Activated CD4-positive, alpha-beta memory T cell treated with anti-CD3 and anti-CD28 coated beads for 36 hours (primary cell): ENCODE measurements at regions of chr6 and their contacts with region 1.

Region 1: GRCh38 chr6:130282234-130282995 is 59.7 kb upstream of the SAMD3 start:
- DNase-seq: no peak
- H3K4me3 Mint-ChIP-seq: no peak overlapping the region
- H3K27ac Mint-ChIP-seq: no peak overlapping the region
- H3K4me1 Mint-ChIP-seq: peaks cover 4% of the 10 kb centered on the region
- H3K27me3 Mint-ChIP-seq: no peaks in the 10 kb centered on the region

Region 2: DNA sequence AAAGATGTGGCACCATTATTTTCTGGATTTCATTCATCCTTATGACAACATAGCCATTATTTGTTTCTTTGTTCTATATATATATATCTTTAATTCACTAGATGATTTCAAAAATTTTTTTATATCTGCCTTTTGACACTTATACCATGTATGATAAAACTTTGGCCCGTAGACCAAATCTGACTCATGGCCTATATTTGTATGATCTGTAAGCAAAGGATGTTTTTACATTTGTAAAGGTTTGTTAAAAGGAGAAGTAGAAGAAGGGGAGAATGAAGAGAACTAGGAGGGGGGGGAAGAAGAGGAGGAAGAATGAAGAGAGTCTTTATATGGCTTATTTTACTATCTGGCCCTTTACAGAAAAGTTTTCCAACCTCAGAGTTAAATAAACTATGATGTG is 1119.8 kb before region 1 on chr6:
- CTCF ChIA-PET with region 1: no interaction called
- POLR2A ChIA-PET with region 1: no interaction called
- intact Hi-C with region 1: no loop called
- DNase-seq: no peak
- H3K4me3 Mint-ChIP-seq: no peak overlapping the region
- H3K27ac Mint-ChIP-seq: no peak overlapping the region
- H3K4me1 Mint-ChIP-seq: no peaks in the 10 kb centered on the region
- H3K27me3 Mint-ChIP-seq: no peaks in the 10 kb centered on the region

Region 3: DNA sequence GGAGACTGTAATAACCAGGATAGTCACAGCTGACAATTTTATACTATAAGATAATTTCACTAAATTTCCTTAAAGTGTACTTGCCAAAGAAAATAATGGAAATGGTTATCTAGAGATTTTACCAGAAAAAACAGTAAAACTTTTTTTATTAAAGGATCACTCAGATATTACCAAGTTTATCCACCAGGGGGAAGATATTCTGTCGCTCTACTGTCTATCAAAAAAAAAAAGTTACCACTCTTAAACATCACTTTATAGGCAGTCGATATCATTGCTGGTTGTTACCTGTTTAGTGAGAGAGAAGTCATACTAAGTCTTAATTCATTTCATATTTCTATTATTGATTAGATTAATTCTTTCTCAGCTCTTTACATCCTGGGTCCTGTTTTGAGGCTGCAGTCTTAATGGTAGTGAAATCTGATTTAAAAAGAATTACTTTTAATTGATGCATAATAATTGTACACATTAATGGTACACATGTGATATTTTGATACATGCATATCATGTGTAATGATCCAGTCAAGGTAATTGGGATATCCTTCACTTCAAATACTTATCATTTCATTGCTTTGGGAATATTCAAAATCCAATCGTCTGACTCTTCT is 245.1 kb before region 1 on chr6:
- CTCF ChIA-PET with region 1: interaction called, 13 read pairs
- POLR2A ChIA-PET with region 1: no interaction called
- intact Hi-C with region 1: no loop called
- DNase-seq: no peak
- H3K4me3 Mint-ChIP-seq: no peak overlapping the region
- H3K27ac Mint-ChIP-seq: no peak overlapping the region
- H3K4me1 Mint-ChIP-seq: peaks cover 43% of the 10 kb centered on the region
- H3K27me3 Mint-ChIP-seq: no peaks in the 10 kb centered on the region

Region 4: GRCh38 chr6:130047088-130047995 is 235.1 kb before region 1 on chr6:
- CTCF ChIA-PET with region 1: interaction called, 13 read pairs
- POLR2A ChIA-PET with region 1: no interaction called
- intact Hi-C with region 1: loop called (anchors 1 kb)
- DNase-seq: no peak
- H3K4me3 Mint-ChIP-seq: no peak overlapping the region
- H3K27ac Mint-ChIP-seq: no peak overlapping the region
- H3K4me1 Mint-ChIP-seq: no peaks in the 10 kb centered on the region
- H3K27me3 Mint-ChIP-seq: no peaks in the 10 kb centered on the region

Region 5: GRCh38 chr6:130076512-130076911 is 205.9 kb before region 1 on chr6:
- CTCF ChIA-PET with region 1: interaction called, 6 read pairs
- POLR2A ChIA-PET with region 1: no interaction called
- intact Hi-C with region 1: loop called (anchors 1 kb)
- DNase-seq: no peak
- H3K4me3 Mint-ChIP-seq: no peak overlapping the region
- H3K27ac Mint-ChIP-seq: no peak overlapping the region
- H3K4me1 Mint-ChIP-seq: peaks cover 12% of the 10 kb centered on the region
- H3K27me3 Mint-ChIP-seq: no peaks in the 10 kb centered on the region

Region 6: GRCh38 chr6:130337534-130337933 is 55.1 kb after region 1 on chr6:
- CTCF ChIA-PET with region 1: no interaction called
- POLR2A ChIA-PET with region 1: no interaction called
- intact Hi-C with region 1: no loop called
- DNase-seq: no peak
- H3K4me3 Mint-ChIP-seq: no peak overlapping the region
- H3K27ac Mint-ChIP-seq: no peak overlapping the region
- H3K4me1 Mint-ChIP-seq: no peaks in the 10 kb centered on the region
- H3K27me3 Mint-ChIP-seq: no peaks in the 10 kb centered on the region